Naive thymus-derived CD4-positive, alpha-beta T cell (primary cell): ENCODE measurements at regions of chr2 and their contacts with region 1.

Region 1: DNA sequence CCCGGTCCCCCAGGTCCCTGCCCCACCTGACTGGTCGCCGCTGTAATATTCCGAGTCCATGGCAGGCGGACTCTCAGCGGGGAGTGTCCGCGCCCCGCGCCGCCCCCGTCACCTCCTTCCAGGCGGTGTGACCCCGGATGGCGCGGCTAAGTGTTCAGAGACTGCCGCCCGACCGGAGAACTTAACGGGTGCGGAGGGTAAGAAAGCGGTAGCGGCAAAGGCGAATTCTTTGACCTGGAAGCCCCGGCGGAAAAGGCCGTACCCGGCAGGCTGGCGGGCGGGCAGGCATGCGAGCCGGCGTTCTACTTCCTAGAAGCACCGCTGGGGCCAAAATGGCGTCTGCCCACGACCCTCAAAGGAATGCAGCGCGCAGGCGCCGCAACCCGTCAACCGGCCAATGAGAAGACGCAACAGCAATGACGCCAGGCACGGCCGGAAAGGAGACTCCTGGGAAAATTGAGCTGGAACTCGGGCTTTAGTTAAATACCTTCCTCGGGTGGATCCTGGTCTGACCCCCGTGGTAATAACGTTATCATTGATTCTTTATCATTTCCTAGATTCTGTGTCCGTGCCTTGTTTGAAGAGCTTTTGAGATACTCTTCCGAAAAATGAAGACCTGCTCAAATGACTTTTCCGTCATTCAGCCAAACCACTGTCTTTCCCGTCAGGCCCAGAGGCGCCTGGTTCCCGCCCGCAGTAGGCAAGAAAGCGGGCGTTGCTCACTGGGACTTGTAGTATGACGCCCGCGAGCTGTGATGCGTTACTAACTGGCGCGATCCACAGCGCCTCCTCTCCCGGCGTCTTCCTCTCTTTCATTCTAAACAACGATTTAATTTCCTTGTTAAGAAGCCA is at the start of gene IWS1:
- DNase-seq: peak; percentile 85 to 95 (median 92)
- ATAC-seq: peak; percentile 94
- H3K4me3 ChIP-seq: peak within 1 kb of the TSS; percentile 87
- H3K4me3 Mint-ChIP-seq: peak within 1 kb of the TSS; percentile 81 to 99 (median 96)
- H3K27ac ChIP-seq: peak within 1 kb of the TSS; percentile 82
- H3K27ac Mint-ChIP-seq: peak within 1 kb of the TSS; percentile 87 to 99 (median 99)
- H3K4me1 ChIP-seq: peaks cover 6 to 9% of the 10 kb centered on the region in 2 donors
- H3K4me1 Mint-ChIP-seq: peaks cover 14 to 49% (median 43%) of the 10 kb centered on the region in 7 donors
- H3K27me3 ChIP-seq: no peaks in the 10 kb centered on the region
- H3K27me3 Mint-ChIP-seq: peaks cover 0 to 9% (median 0%) of the 10 kb centered on the region in 5 donors
- total RNA-seq, gene IWS1: 24.0 to 57.5 (median 43.4) TPM

Region 2: GRCh38 chr2:127086990-127087790 is 439.2 kb before region 1 on chr2:
- CTCF ChIA-PET with region 1: no interaction called
- POLR2A ChIA-PET with region 1: interaction called, 3 read pairs
- intact Hi-C with region 1: loop called (anchors 5 to 10 kb)
- DNase-seq: no peak
- ATAC-seq: peak; percentile 20
- H3K4me3 ChIP-seq: no peak overlapping the region
- H3K4me3 Mint-ChIP-seq: peak overlapping the region in 4 of 10 donors; percentile 10 to 34 (median 26)
- H3K27ac ChIP-seq: no peak overlapping the region
- H3K27ac Mint-ChIP-seq: peak overlapping the region in 8 of 9 donors; percentile 20 to 99 (median 62)
- H3K4me1 ChIP-seq: peaks cover 40 to 41% of the 10 kb centered on the region in 2 donors
- H3K4me1 Mint-ChIP-seq: peaks cover 34 to 56% (median 43%) of the 10 kb centered on the region in 7 donors
- H3K27me3 ChIP-seq: no peaks in the 10 kb centered on the region
- H3K27me3 Mint-ChIP-seq: peaks cover 0 to 9% (median 0%) of the 10 kb centered on the region in 5 donors

Region 3: DNA sequence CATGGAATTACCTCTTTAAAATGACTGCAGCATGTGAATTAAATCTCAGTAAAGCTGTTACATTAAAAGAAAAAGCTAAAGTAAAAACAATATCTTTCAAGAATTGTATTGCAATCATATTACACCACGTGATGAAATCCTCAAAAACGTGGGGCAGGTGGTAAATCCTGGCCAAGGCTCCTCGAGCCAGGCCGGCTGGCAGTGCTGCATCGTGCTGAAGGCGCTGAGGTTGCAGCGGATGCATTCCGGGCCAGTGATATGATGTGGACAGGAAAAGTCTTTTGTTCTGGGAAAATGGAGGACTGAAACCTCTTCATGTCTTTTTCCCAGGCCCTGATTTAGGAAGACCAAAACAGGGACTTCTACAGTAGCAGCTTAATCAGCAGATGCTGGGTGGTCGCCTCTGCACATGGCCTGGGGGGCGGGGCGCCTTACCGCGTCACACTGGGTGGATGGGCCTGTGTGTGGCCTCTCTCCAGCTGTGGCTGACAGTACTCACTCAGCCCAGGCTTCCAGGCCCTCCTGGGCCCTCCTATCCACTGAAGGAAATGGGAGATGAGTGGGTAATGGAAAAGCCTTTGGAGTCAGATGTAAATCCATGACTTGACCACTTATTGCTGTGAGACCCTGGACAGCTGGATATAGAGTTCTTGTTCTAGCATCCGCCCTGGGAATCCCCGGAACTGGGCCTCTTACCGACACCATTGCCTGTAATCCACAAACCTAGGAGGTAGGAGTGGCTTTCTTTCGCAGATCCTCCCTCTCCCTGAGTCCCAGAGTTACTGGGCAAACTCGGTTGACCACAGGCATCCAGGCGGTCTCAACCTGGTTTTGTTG is 63.0 kb before region 1 on chr2:
- CTCF ChIA-PET with region 1: no interaction called
- POLR2A ChIA-PET with region 1: no interaction called
- intact Hi-C with region 1: no loop called
- DNase-seq: no peak
- ATAC-seq: no peak
- H3K4me3 ChIP-seq: no peak overlapping the region
- H3K4me3 Mint-ChIP-seq: no peak overlapping the region
- H3K27ac ChIP-seq: no peak overlapping the region
- H3K27ac Mint-ChIP-seq: no peak overlapping the region
- H3K4me1 ChIP-seq: no peaks in the 10 kb centered on the region
- H3K4me1 Mint-ChIP-seq: peaks cover 7 to 22% (median 15%) of the 10 kb centered on the region in 7 donors
- H3K27me3 ChIP-seq: no peaks in the 10 kb centered on the region
- H3K27me3 Mint-ChIP-seq: no peaks in the 10 kb centered on the region

Region 4: DNA sequence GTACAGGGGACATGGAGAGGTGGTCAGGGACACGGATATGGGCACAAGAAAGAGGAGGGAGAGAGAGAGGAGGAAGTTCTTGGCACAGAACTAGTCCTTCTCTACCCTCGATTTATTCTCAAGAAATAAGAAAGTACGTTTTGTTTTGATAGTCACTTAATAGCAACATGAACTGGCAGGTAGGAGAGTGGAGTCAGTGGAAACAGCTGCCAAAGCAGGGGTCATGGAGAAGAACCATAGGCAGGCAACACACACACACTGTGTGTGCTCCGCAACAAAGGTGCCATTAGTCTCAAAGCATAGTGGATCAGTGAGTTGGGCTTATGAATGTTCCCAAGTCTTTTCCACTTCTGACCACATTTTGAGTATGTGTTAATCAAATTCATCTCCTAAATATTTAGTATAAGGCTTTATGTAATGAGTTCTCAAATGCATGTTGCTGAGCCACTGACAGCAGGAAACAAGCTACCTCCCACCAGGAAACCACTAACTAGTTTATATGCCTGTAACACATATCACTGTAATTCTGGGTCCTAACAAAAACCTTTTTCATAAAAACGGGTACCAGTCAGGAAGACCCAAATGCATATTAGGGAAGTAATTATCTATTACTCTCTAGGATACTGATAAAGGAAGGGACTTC is 41.2 kb before region 1 on chr2:
- CTCF ChIA-PET with region 1: no interaction called
- POLR2A ChIA-PET with region 1: no interaction called
- intact Hi-C with region 1: loop called in 1 of 2 experiments (anchors 2 kb)
- DNase-seq: peak in 2 of 9 donors; percentile 4 to 7
- ATAC-seq: no peak
- H3K4me3 ChIP-seq: no peak overlapping the region
- H3K4me3 Mint-ChIP-seq: peak overlapping the region in 6 of 10 donors; percentile 5 to 71 (median 46)
- H3K27ac ChIP-seq: peak overlapping the region; percentile 42
- H3K27ac Mint-ChIP-seq: peak overlapping the region; percentile 75 to 88 (median 82)
- H3K4me1 ChIP-seq: peaks cover 0 to 4% of the 10 kb centered on the region in 2 donors
- H3K4me1 Mint-ChIP-seq: peaks cover 9 to 39% (median 35%) of the 10 kb centered on the region in 7 donors
- H3K27me3 ChIP-seq: no peaks in the 10 kb centered on the region
- H3K27me3 Mint-ChIP-seq: no peaks in the 10 kb centered on the region

Region 5: GRCh38 chr2:127640082-127641072 is 114.0 kb after region 1 on chr2:
- CTCF ChIA-PET with region 1: no interaction called
- POLR2A ChIA-PET with region 1: interaction called, 9 read pairs
- intact Hi-C with region 1: loop called (anchors 1 to 2 kb)
- DNase-seq: peak in 6 of 9 donors; percentile 30 to 38 (median 35)
- ATAC-seq: peak; percentile 2
- H3K4me3 ChIP-seq: peak overlapping the region; percentile 64
- H3K4me3 Mint-ChIP-seq: peak overlapping the region; percentile 53 to 85 (median 78)
- H3K27ac ChIP-seq: peak overlapping the region; percentile 78
- H3K27ac Mint-ChIP-seq: peak overlapping the region; percentile 80 to 96 (median 93)
- H3K4me1 ChIP-seq: peaks cover 3 to 77% of the 10 kb centered on the region in 2 donors
- H3K4me1 Mint-ChIP-seq: peaks cover 14 to 89% (median 66%) of the 10 kb centered on the region in 7 donors
- H3K27me3 ChIP-seq: no peaks in the 10 kb centered on the region
- H3K27me3 Mint-ChIP-seq: no peaks in the 10 kb centered on the region

Region 6: GRCh38 chr2:127857265-127857808 is 331.0 kb after region 1 on chr2:
- CTCF ChIA-PET with region 1: no interaction called
- POLR2A ChIA-PET with region 1: no interaction called
- intact Hi-C with region 1: loop called in 1 of 2 experiments (anchors 5 kb)
- DNase-seq: no peak
- ATAC-seq: no peak
- H3K4me3 ChIP-seq: peak overlapping the region; percentile 98
- H3K4me3 Mint-ChIP-seq: peak overlapping the region; percentile 84 to 99 (median 94)
- H3K27ac ChIP-seq: peak overlapping the region; percentile 86
- H3K27ac Mint-ChIP-seq: peak overlapping the region; percentile 29 to 97 (median 90)
- H3K4me1 ChIP-seq: peaks cover 22 to 25% of the 10 kb centered on the region in 2 donors
- H3K4me1 Mint-ChIP-seq: peaks cover 22 to 68% (median 44%) of the 10 kb centered on the region in 7 donors
- H3K27me3 ChIP-seq: no peaks in the 10 kb centered on the region
- H3K27me3 Mint-ChIP-seq: no peaks in the 10 kb centered on the region

Region 7: DNA sequence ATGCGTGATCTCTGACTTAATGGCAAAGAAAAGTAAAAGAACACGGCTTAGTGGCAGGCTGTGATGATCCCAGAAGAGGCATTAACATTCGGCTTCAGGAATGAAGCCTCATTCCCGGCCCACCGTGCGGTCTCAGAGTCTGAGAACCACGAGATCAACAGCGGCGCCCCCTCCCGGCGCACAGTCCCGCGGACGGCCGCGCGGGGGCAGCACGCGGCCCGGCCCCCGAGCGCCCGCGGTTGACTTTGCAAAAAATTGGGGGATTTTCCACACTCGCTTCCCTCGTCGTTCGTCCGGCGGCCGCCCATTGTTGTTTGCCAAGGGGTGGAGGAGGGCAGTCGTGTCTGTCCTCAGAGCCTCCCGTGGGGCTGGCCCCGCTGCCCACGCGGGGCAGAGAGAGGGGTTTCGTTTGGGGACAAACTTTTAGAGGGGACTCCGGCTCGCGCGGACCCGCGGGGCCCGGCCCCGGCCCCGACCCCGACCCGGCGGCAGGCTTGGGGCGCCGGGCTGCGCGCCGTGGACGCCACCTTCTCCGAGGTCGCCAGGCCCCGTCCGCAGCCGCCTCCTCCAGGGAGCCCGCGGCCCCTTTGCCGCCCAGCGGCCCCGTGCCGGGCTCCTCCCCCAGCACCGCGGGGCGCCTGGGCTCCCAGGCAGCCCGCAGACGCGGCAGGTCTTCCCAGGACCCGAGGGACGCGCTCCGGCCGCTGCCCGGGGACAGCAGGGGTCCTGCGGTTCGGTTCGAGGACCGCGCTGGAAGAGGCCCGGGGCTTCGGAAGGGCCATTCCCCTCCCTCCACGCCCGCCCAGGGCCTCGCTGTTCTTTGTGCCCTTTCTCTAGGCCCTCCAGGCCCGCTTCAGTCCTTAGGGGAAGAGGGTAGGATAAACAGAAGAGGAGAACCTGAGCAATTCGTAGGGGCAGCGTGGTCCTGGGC is 795.7 kb after region 1 on chr2:
- CTCF ChIA-PET with region 1: no interaction called
- POLR2A ChIA-PET with region 1: no interaction called
- intact Hi-C with region 1: loop called in 1 of 2 experiments (anchors 10 kb)
- DNase-seq: peak; percentile 58 to 87 (median 76)
- ATAC-seq: peak; percentile 76
- H3K4me3 ChIP-seq: peak overlapping the region; percentile 68
- H3K4me3 Mint-ChIP-seq: peak overlapping the region; percentile 70 to 92 (median 76)
- H3K27ac ChIP-seq: peak overlapping the region; percentile 64
- H3K27ac Mint-ChIP-seq: peak overlapping the region in 6 of 9 donors; percentile 28 to 80 (median 50)
- H3K4me1 ChIP-seq: peaks cover 10 to 18% of the 10 kb centered on the region in 2 donors
- H3K4me1 Mint-ChIP-seq: peaks cover 10 to 24% (median 14%) of the 10 kb centered on the region in 7 donors
- H3K27me3 ChIP-seq: no peaks in the 10 kb centered on the region
- H3K27me3 Mint-ChIP-seq: peaks cover 0 to 16% (median 0%) of the 10 kb centered on the region in 5 donors